CD4-positive, alpha-beta T cell (primary cell): ENCODE measurements at regions of chr11 and their contacts with region 1.

Region 1: DNA sequence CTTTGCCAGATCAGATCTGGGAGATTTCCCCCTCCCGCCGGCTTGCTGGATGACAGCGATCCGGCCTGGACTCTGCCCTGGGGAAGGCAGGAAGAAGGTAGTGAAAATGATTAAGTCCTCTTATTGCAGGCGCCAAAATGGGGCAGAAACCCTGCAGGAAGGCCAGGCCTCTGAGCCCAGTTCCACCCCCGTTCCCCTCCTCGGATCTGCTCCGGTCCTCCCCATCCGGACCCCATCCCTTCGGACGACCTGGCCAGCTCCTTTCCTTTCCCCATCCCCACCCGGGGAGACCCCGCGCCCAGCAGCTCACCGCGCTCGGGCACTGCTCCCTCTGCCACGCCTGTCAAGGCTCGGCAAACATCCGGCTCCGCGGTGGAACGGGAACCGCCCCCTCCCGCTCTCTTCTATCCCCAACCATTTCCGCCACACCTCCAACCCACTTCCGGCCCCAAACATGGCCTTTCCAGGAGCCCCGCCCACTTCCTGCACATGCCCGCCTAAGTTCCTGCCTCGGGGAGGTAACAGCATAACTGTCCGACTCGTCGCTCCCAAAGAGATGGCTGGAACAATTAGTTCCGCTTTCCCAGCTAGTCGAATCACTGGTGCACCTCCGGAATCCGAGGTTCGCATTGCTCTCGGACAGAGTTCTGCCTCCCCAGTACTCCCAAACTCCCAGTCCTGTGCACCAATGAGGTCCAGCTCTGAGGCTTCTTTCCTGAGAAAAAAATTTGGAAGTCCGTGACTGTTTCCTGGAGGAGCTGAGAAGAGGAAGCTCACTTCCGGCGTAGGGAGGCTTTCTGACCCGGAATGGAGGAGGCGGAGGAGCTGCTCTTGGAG is at the starts of genes ARHGAP1 and ZNF408:
- DNase-seq: peak; percentile 98 to 100 (median 99)
- ATAC-seq: peak; percentile 93
- H3K4me3 ChIP-seq: peak within 1 kb of the TSS; percentile 84
- H3K4me3 Mint-ChIP-seq: peak within 1 kb of the TSS; percentile 96
- H3K27ac ChIP-seq: peak within 1 kb of the TSS; percentile 72 to 78
- H3K27ac Mint-ChIP-seq: peak within 1 kb of the TSS; percentile 87
- H3K4me1 ChIP-seq: peaks cover 62% of the 10 kb centered on the region
- H3K4me1 Mint-ChIP-seq: peaks cover 62% of the 10 kb centered on the region
- H3K27me3 ChIP-seq: no peaks in the 10 kb centered on the region
- H3K27me3 Mint-ChIP-seq: no peaks in the 10 kb centered on the region
- CTCF ChIP-seq: no peak
- total RNA-seq, gene ARHGAP1: 33.7 to 36.3 TPM
- total RNA-seq, gene ZNF408: 22.7 to 23.0 TPM

Region 2: GRCh38 chr11:45917623-45918330 is 782.7 kb before region 1 on chr11 and contains the start of gene PEX16:
- CTCF ChIA-PET with region 1: no interaction called
- POLR2A ChIA-PET with region 1: no interaction called
- intact Hi-C with region 1: loop called in 1 of 2 experiments (anchors 5 kb)
- DNase-seq: peak; percentile 87 to 99 (median 94)
- ATAC-seq: peak; percentile 89
- H3K4me3 ChIP-seq: peak within 1 kb of the TSS; percentile 93
- H3K4me3 Mint-ChIP-seq: peak within 1 kb of the TSS; percentile 99
- H3K27ac ChIP-seq: peak within 1 kb of the TSS; percentile 90 to 95
- H3K27ac Mint-ChIP-seq: peak within 1 kb of the TSS; percentile 94
- H3K4me1 ChIP-seq: peaks cover 70% of the 10 kb centered on the region
- H3K4me1 Mint-ChIP-seq: peaks cover 54% of the 10 kb centered on the region
- H3K27me3 ChIP-seq: peaks cover 0 to 6% of the 10 kb centered on the region in 2 experiments
- H3K27me3 Mint-ChIP-seq: peaks cover 5% of the 10 kb centered on the region
- CTCF ChIP-seq: no peak
- total RNA-seq, gene PEX16: 56.3 to 62.0 TPM

Region 3: DNA sequence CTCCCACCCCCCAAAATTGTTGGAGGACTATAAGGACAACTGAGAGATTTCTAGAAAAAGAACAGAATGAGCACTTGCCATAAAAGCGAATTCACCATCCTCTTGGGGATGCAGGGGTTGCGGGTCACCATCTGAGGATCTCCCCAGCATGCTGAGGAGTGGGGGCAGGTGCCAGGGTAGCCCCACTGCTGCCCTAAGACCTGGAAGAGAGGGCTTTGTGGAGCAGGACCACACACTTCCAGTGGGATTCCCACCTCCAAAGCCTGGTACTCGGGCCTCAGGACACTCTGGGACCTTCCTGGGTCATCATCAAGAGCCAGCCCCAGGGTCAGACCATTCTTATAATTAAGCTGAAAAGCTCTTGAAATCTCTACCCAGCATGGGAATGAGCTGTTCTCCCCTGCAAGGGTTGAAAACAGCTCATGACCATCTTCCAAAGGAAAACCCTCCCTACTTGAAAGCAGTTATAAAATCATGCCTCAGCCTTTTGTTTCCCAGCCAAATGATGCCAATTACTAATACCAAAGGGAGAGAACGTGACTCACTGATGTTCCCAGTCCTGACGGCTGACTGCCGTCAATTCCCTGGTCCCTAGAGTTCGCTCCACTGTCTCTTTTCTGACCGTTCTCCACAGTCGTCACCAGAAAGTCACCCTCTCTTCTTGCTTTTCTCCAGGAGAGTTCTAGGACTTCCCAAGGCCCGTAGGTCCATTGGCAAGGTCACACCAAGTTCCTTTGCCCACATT is 499.8 kb before region 1 on chr11:
- CTCF ChIA-PET with region 1: no interaction called
- POLR2A ChIA-PET with region 1: no interaction called
- intact Hi-C with region 1: no loop called
- DNase-seq: no peak
- ATAC-seq: no peak
- H3K4me3 ChIP-seq: no peak overlapping the region
- H3K4me3 Mint-ChIP-seq: no peak overlapping the region
- H3K27ac ChIP-seq: no peak overlapping the region
- H3K27ac Mint-ChIP-seq: no peak overlapping the region
- H3K4me1 ChIP-seq: no peaks in the 10 kb centered on the region
- H3K4me1 Mint-ChIP-seq: no peaks in the 10 kb centered on the region
- H3K27me3 ChIP-seq: peaks cover 2 to 7% of the 10 kb centered on the region in 2 experiments
- H3K27me3 Mint-ChIP-seq: peaks cover 42% of the 10 kb centered on the region
- CTCF ChIP-seq: no peak

Region 4: DNA sequence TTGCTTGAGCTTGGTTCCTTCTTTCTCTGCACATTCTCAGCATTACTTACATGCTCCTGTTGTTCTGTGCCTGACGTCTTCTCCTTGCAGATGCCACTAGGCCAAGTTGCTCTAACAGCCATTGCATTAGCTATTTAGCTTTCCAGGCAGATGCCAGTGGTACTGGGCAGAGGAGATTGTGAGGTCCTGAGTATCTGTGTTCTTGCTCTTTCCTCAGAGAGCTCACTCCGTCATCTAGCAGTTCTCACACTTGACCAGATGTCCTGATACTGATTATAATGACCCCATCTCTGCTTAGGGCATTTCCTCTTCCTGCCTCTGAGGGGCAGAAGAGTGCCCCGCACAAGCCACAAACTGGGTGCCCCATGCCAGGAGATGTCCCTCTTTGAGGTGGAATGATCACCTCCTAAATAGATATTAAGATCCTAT is 30.7 kb before region 1 on chr11:
- CTCF ChIA-PET with region 1: interaction called, 4 read pairs
- POLR2A ChIA-PET with region 1: interaction called, 146 read pairs
- intact Hi-C with region 1: loop called in 1 of 2 experiments (anchors 1 kb)
- DNase-seq: peak in 2 of 14 experiments; percentile 21 to 29
- ATAC-seq: no peak
- H3K4me3 ChIP-seq: no peak overlapping the region
- H3K4me3 Mint-ChIP-seq: peak overlapping the region; percentile 60
- H3K27ac ChIP-seq: peak overlapping the region in 1 of 2 donors; percentile 55
- H3K27ac Mint-ChIP-seq: peak overlapping the region; percentile 80
- H3K4me1 ChIP-seq: peaks cover 59% of the 10 kb centered on the region
- H3K4me1 Mint-ChIP-seq: peaks cover 59% of the 10 kb centered on the region
- H3K27me3 ChIP-seq: no peaks in the 10 kb centered on the region
- H3K27me3 Mint-ChIP-seq: no peaks in the 10 kb centered on the region
- CTCF ChIP-seq: no peak

Region 5: GRCh38 chr11:46936138-46937110 is 236.0 kb after region 1 on chr11 and contains the start of gene CSTPP1:
- CTCF ChIA-PET with region 1: no interaction called
- POLR2A ChIA-PET with region 1: no interaction called
- intact Hi-C with region 1: loop called in 1 of 2 experiments (anchors 5 kb)
- DNase-seq: peak; percentile 87 to 95 (median 92)
- ATAC-seq: peak; percentile 96
- H3K4me3 ChIP-seq: peak within 1 kb of the TSS; percentile 73
- H3K4me3 Mint-ChIP-seq: peak within 1 kb of the TSS; percentile 91
- H3K27ac ChIP-seq: peak within 1 kb of the TSS; percentile 28 to 39
- H3K27ac Mint-ChIP-seq: peak within 1 kb of the TSS; percentile 83
- H3K4me1 ChIP-seq: peaks cover 18% of the 10 kb centered on the region
- H3K4me1 Mint-ChIP-seq: peaks cover 22% of the 10 kb centered on the region
- H3K27me3 ChIP-seq: peaks cover 0 to 3% of the 10 kb centered on the region in 2 experiments
- H3K27me3 Mint-ChIP-seq: peaks cover 8% of the 10 kb centered on the region
- CTCF ChIP-seq: no peak
- total RNA-seq, gene CSTPP1: 6.6 to 7.3 TPM

Region 6: GRCh38 chr11:47269002-47269828 is 568.8 kb after region 1 on chr11:
- CTCF ChIA-PET with region 1: no interaction called
- POLR2A ChIA-PET with region 1: no interaction called
- intact Hi-C with region 1: loop called in 1 of 2 experiments (anchors 10 kb)
- DNase-seq: peak; percentile 74 to 93 (median 84)
- ATAC-seq: peak; percentile 62
- H3K4me3 ChIP-seq: peak overlapping the region; percentile 71
- H3K4me3 Mint-ChIP-seq: peak overlapping the region; percentile 94
- H3K27ac ChIP-seq: peak overlapping the region; percentile 91 to 94
- H3K27ac Mint-ChIP-seq: peak overlapping the region; percentile 99
- H3K4me1 ChIP-seq: peaks cover 58% of the 10 kb centered on the region
- H3K4me1 Mint-ChIP-seq: peaks cover 57% of the 10 kb centered on the region
- H3K27me3 ChIP-seq: no peaks in the 10 kb centered on the region
- H3K27me3 Mint-ChIP-seq: no peaks in the 10 kb centered on the region
- CTCF ChIP-seq: peak; percentile 22

Region 7: DNA sequence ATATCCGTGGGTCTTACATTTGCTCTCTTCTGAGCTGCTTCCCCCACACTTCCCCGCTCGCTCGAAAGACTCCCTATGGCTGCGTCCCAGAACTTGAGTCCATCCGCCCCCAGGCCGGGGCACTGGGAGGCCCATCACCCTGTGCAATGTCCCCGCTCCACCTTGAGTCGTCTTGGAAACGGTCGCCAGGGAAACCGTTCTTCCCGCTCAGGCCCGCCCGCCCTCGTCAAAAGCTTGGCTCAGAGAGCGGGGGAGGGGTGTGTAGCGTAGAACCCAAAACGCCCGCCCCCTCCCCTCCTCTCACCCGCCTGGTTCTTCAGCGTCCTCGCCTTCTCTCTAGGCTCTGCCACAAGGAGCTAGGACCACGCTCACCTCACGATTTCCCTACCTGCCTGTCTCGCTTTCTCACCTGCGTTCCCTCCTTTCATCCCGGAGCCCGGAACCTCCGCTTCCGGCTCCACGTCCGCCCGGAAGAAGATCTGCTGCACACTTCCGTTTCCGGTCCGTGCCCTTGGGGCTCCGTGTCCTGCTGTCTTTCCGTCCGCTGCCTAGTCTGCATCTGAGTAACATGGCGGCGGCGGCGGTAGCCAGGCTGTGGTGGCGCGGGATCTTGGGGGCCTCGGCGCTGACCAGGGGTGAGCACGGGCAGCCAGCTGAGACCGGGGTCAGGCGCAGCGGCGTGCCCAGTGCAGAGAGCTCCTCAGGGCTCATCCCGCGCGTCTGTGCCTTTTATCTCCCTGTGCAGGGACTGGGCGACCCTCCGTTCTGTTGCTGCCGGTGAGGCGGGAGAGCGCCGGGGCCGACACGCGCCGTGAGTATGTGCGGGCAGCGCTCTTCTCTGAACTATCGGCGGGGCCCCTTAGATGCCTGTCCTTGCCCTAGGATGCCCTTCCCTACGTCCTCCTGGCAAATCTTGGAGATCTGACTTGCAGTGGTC is 878.3 kb after region 1 on chr11 and contains the starts of genes KBTBD4 and NDUFS3:
- CTCF ChIA-PET with region 1: no interaction called
- POLR2A ChIA-PET with region 1: no interaction called
- intact Hi-C with region 1: loop called in 1 of 2 experiments (anchors 10 kb)
- DNase-seq: peak; percentile 81 to 95 (median 85)
- ATAC-seq: peak; percentile 91
- H3K4me3 ChIP-seq: peak within 1 kb of the TSS; percentile 90
- H3K4me3 Mint-ChIP-seq: peak within 1 kb of the TSS; percentile 99
- H3K27ac ChIP-seq: peak within 1 kb of the TSS; percentile 76 to 81
- H3K27ac Mint-ChIP-seq: peak within 1 kb of the TSS; percentile 91
- H3K4me1 ChIP-seq: peaks cover 38% of the 10 kb centered on the region
- H3K4me1 Mint-ChIP-seq: peaks cover 41% of the 10 kb centered on the region
- H3K27me3 ChIP-seq: no peaks in the 10 kb centered on the region
- H3K27me3 Mint-ChIP-seq: no peaks in the 10 kb centered on the region
- CTCF ChIP-seq: no peak
- total RNA-seq, gene KBTBD4: 29.1 to 30.2 TPM
- total RNA-seq, gene NDUFS3: 139 to 144 TPM

Region 8: GRCh38 chr11:47961383-47961782 is 1260.9 kb after region 1 on chr11:
- CTCF ChIA-PET with region 1: no interaction called
- POLR2A ChIA-PET with region 1: no interaction called
- intact Hi-C with region 1: no loop called
- DNase-seq: no peak
- ATAC-seq: no peak
- H3K4me3 ChIP-seq: no peak overlapping the region
- H3K4me3 Mint-ChIP-seq: no peak overlapping the region
- H3K27ac ChIP-seq: no peak overlapping the region
- H3K27ac Mint-ChIP-seq: no peak overlapping the region
- H3K4me1 ChIP-seq: no peaks in the 10 kb centered on the region
- H3K4me1 Mint-ChIP-seq: no peaks in the 10 kb centered on the region
- H3K27me3 ChIP-seq: no peaks in the 10 kb centered on the region
- H3K27me3 Mint-ChIP-seq: no peaks in the 10 kb centered on the region
- CTCF ChIP-seq: no peak